ENCODE measurements at regions of chrX and their contacts with region 1.

Region 1: GRCh38 chrX:122279746-122280145 is 904.3 kb upstream of the GRIA3 start:
- DNase-seq: no peak
- ATAC-seq: peak; percentile 74
- H3K4me3 ChIP-seq: no peak overlapping the region
- H3K27ac ChIP-seq: no peak overlapping the region
- H3K4me1 ChIP-seq: no peaks in the 10 kb centered on the region
- H3K27me3 ChIP-seq: no peaks in the 10 kb centered on the region
- CTCF ChIP-seq: no peak
- EP300 ChIP-seq: no peak; a peak in 1 of 4 replicates
- POLR2A ChIP-seq: no peak
- RAD21 ChIP-seq: no peak

Region 2: DNA sequence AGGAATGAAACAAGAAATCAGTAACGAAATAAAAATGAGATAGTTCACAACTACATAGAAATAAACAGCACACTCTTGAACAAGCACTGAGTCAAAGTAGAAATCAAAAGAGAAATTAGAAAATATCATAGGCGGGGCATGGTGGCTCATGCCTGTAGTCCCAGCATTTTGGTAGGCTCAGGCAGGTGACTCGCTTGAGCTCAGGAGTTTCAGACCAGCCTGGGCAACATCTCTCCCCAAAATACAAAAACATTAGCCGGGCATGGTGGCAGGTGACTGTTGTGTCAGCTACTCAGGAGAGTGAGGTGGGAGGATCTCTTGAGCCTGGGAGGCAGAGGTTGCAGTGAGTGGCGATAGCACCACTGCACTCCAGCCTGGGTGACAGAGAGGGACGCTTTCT is 517.9 kb before region 1 on chrX:
- CTCF ChIA-PET with region 1: no interaction called
- POLR2A ChIA-PET with region 1: no interaction called
- RAD21 ChIA-PET with region 1: no interaction called
- SMC1A ChIA-PET with region 1: interaction called, 4 read pairs
- in situ Hi-C with region 1: no loop called
- intact Hi-C with region 1: loop called (anchors 5 kb)
- DNase-seq: no peak
- ATAC-seq: peak; percentile 70
- H3K4me3 ChIP-seq: no peak overlapping the region
- H3K27ac ChIP-seq: no peak overlapping the region
- H3K4me1 ChIP-seq: no peaks in the 10 kb centered on the region
- H3K27me3 ChIP-seq: no peaks in the 10 kb centered on the region
- CTCF ChIP-seq: no peak
- EP300 ChIP-seq: no peak
- POLR2A ChIP-seq: no peak
- RAD21 ChIP-seq: no peak

Region 3: DNA sequence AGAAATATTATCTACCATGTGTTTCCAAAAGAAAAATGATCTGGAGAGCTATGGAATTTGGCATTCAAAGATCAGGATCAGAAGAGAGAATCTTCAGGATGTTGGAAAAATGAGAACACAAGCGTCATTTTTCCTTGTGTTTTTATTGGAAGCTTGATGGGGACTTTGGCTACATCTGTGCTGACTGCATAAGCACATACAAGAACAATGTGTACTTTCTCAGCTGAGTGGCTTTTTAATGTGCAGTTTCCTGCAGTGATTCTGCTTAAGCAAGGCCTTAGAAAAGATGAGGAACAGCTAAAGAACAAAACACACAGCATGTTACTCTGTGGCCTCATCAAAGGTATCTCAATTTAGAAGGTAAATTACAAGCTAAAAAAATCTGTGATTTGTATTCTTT is 192.4 kb before region 1 on chrX:
- CTCF ChIA-PET with region 1: no interaction called
- POLR2A ChIA-PET with region 1: no interaction called
- RAD21 ChIA-PET with region 1: no interaction called
- SMC1A ChIA-PET with region 1: no interaction called
- in situ Hi-C with region 1: no loop called
- intact Hi-C with region 1: no loop called
- DNase-seq: no peak
- ATAC-seq: no peak
- H3K4me3 ChIP-seq: no peak overlapping the region
- H3K27ac ChIP-seq: no peak overlapping the region
- H3K4me1 ChIP-seq: no peaks in the 10 kb centered on the region
- H3K27me3 ChIP-seq: no peaks in the 10 kb centered on the region
- CTCF ChIP-seq: no peak
- EP300 ChIP-seq: no peak
- POLR2A ChIP-seq: no peak
- RAD21 ChIP-seq: no peak

Region 4: GRCh38 chrX:122219226-122219625 is 60.5 kb before region 1 on chrX:
- CTCF ChIA-PET with region 1: no interaction called
- POLR2A ChIA-PET with region 1: no interaction called
- RAD21 ChIA-PET with region 1: no interaction called
- SMC1A ChIA-PET with region 1: no interaction called
- in situ Hi-C with region 1: no loop called
- intact Hi-C with region 1: no loop called
- DNase-seq: no peak
- ATAC-seq: no peak
- H3K4me3 ChIP-seq: no peak overlapping the region
- H3K27ac ChIP-seq: no peak overlapping the region
- H3K4me1 ChIP-seq: no peaks in the 10 kb centered on the region
- H3K27me3 ChIP-seq: no peaks in the 10 kb centered on the region
- CTCF ChIP-seq: no peak
- EP300 ChIP-seq: no peak
- POLR2A ChIP-seq: no peak
- RAD21 ChIP-seq: no peak

Region 5: DNA sequence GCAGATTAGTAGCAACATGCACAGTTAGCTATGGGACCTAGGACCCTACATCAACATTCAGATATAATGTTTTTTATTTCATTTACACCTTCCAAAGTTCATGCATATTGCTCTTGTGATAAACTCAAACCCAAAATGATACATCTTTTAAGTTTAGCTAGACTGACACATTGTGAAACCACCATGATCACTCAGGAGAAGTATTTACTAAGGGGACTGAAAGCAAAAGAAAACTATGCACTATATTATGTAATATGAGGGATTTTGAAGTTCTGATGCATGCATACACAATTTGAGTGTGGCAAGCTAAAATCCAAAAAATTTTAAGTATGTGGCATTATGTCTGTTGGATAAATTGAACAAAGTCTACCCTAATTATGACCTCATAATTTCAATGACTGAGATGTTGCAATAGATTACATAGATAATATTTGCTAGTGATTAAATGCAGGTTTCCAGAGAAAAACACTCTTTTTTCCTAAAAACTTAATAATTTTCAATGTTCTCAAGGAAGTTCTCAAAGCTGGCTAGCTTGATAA is 10.4 kb before region 1 on chrX:
- CTCF ChIA-PET with region 1: interaction called, 5 read pairs
- POLR2A ChIA-PET with region 1: interaction called, 14 read pairs
- RAD21 ChIA-PET with region 1: interaction called, 35 read pairs
- SMC1A ChIA-PET with region 1: interaction called, 12 read pairs
- in situ Hi-C with region 1: no loop called
- intact Hi-C with region 1: no loop called
- DNase-seq: no peak
- ATAC-seq: peak; percentile 75
- H3K4me3 ChIP-seq: no peak overlapping the region
- H3K27ac ChIP-seq: no peak overlapping the region
- H3K4me1 ChIP-seq: no peaks in the 10 kb centered on the region
- H3K27me3 ChIP-seq: no peaks in the 10 kb centered on the region
- CTCF ChIP-seq: no peak
- EP300 ChIP-seq: 0 out of 4 replicates have a peak, but pooled peaks of 1 of the 2 experiments have one; percentile 9
- POLR2A ChIP-seq: no peak
- RAD21 ChIP-seq: no peak